PC-9 (cell line): ENCODE measurements at regions of chr22 and their contacts with region 1.

Region 1: GRCh38 chr22:20393909-20394691 is at the start of gene ZNF74:
- DNase-seq: peak; percentile 69 to 77
- H3K4me3 ChIP-seq: peak within 1 kb of the TSS; percentile 66
- H3K27ac ChIP-seq: no peak within 1 kb of the TSS
- H3K4me1 ChIP-seq: no peaks in the 10 kb centered on the region
- H3K27me3 ChIP-seq: no peaks in the 10 kb centered on the region
- CTCF ChIP-seq: no peak
- total RNA-seq, gene ZNF74: 8.1 and 15.2 TPM in 2 replicates

Region 2: DNA sequence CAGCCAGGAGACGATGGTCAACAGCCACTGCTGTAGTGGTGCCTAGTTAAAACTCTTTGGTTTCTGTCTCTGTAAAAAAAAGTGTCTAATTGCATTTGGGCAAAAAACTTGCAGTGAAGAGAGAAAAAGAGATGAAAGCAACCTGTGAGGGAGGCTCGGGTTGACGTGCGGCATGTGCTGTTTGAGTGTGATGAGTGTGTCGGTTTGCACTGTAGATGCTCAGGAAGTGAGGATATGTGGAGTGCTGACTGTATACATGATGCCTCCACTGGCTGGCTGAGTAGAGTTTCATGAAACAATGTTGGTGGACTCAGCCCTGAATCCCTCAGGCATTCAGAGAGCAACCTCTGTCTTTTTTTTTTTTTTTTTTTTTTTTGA is 70.0 kb before region 1 on chr22:
- CTCF ChIA-PET with region 1: no interaction called
- POLR2A ChIA-PET with region 1: interaction called, 14 read pairs
- intact Hi-C with region 1: no loop called
- DNase-seq: no peak
- H3K4me3 ChIP-seq: no peak overlapping the region
- H3K27ac ChIP-seq: no peak overlapping the region
- H3K4me1 ChIP-seq: peaks cover under 1% of the 10 kb centered on the region; the same call in 1 of the 2 replicates
- H3K27me3 ChIP-seq: no peaks in the 10 kb centered on the region
- CTCF ChIP-seq: no peak